ENCODE measurements at regions of chr1 and their contacts with region 1.

Region 1: GRCh38 chr1:51504806-51505525 is 14.1 kb downstream of the EPS15 start:
- DNase-seq: no peak
- H3K4me3 Mint-ChIP-seq: no peak overlapping the region
- H3K27ac Mint-ChIP-seq: no peak overlapping the region
- H3K4me1 Mint-ChIP-seq: peaks cover 9% of the 10 kb centered on the region
- H3K27me3 Mint-ChIP-seq: no peaks in the 10 kb centered on the region
- CTCF ChIP-seq: no peak

Region 2: DNA sequence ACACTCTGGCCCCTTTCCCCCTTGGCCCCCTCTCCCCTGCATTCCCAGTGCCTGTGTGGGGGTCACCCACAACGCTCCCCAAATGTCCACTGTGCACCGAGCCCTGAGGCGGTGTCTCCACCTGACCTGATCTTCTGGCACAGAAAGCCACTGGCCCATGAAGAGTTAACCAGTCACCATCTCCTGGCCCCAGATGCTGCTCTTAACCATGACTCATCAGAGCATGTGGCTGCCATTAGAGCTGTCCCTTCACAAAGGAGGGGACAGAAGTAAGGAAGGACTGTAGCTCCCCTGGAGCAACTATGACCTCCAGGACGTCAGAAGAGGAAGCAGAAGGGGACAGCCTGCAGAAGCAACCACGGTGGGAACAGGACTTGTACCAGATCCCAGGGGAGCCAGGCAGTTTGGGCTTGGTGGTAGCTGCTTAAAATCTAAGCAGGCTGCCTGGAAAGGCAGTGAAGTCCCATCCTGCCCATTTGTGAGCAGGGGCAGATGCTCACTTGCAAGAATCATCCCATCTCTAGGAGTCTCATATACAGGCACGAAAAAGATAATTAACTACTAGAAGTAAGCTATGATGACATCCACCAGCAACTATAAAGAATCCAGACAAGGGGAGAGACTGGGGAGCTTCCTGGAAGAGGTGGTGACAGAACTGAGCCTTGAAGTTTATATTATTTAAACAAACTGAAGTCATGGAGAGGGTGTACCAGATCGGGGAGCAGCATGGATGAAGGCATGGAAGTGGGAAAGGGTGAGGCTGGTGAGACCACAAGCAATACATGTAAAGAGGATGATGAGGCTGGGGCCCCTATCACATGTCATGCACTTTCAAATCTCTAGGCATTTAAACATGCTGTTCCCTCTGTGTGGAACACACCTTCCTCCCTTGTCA is 173.5 kb before region 1 on chr1:
- CTCF ChIA-PET with region 1: interaction called, 10 read pairs
- intact Hi-C with region 1: no loop called
- DNase-seq: peak; percentile 56
- H3K4me3 Mint-ChIP-seq: peak overlapping the region; percentile 75
- H3K27ac Mint-ChIP-seq: peak overlapping the region; percentile 94
- H3K4me1 Mint-ChIP-seq: peaks cover 52% of the 10 kb centered on the region
- H3K27me3 Mint-ChIP-seq: no peaks in the 10 kb centered on the region
- CTCF ChIP-seq: no peak

Region 3: DNA sequence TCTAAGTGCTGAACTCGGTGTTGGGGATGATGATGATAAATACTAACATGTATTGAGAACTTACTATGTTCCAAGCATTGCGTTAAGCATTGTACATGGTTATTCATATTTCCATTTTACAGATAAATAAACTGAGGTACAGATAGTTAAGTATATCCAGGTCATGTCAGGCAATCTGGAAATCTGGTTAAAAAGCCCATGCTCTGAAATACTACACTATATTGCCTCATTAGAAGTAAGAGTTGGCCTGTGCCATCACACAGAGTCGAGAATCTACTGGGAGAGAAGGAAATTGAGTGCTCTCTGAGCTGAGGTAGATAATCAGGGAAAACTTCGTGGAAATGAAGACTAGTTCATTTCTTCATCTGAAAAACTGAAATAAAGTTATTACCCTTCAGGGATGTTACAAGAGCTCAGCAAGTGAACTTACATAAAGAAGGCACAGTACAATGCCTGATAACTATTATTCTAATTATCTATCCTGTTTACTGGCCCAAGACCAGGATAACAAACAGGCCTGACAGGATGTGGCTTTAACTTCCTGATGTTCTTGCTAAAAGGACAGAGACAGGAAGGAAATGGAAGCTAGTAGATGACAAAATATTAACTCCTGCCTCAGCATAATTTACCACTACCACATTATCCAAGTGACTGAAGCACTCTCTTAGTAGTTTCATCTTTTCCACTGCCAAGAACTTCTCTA is 71.5 kb before region 1 on chr1:
- CTCF ChIA-PET with region 1: no interaction called
- intact Hi-C with region 1: no loop called
- DNase-seq: no peak
- H3K4me3 Mint-ChIP-seq: no peak overlapping the region
- H3K27ac Mint-ChIP-seq: no peak overlapping the region
- H3K4me1 Mint-ChIP-seq: no peaks in the 10 kb centered on the region
- H3K27me3 Mint-ChIP-seq: no peaks in the 10 kb centered on the region
- CTCF ChIP-seq: no peak

Region 4: DNA sequence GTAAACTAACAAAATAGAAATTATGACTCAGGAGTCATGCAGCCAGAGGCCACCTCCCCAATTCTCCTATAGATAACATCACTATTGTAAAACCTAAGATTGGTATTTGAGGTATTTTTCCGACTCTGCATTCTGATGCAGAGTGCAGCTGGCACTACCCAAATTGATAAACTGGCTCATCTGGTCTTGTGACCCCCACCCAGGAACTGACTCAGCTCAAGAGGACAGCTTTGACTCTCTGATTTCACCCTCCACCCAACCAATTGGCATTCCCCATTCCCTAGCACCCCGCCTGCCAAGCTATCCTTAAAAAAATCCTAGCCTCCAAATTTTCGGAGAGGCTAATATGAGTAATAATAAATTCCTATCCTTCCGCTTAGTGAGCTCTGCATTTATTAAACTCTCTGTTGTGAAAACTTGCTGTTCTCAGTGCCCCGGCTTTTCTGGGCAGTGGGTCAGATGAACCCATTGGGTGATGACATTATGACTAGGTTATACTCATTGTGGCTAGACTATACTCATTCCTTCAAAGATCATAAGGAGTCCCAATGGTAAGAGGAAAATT is 53.5 kb after region 1 on chr1:
- CTCF ChIA-PET with region 1: no interaction called
- intact Hi-C with region 1: no loop called
- DNase-seq: peak; percentile 75
- H3K4me3 Mint-ChIP-seq: peak overlapping the region; percentile 42
- H3K27ac Mint-ChIP-seq: peak overlapping the region; percentile 79
- H3K4me1 Mint-ChIP-seq: peaks cover 30% of the 10 kb centered on the region
- H3K27me3 Mint-ChIP-seq: no peaks in the 10 kb centered on the region
- CTCF ChIP-seq: no peak

Measured in Calu3 (cell line).